OCI-LY7 (cell line): ENCODE measurements at regions of chrX and their contacts with region 1.

Region 1: GRCh38 chrX:47523297-47523696 is 37.7 kb upstream of the ARAF start:
- DNase-seq: peak; percentile 78
- H3K4me3 ChIP-seq: peak overlapping the region; percentile 68
- H3K27ac ChIP-seq: no peak overlapping the region
- H3K4me1 ChIP-seq: peaks cover 9% of the 10 kb centered on the region
- CTCF ChIP-seq: peak; percentile 74

Region 2: GRCh38 chrX:47384502-47384901 is 138.8 kb before region 1 on chrX:
- CTCF ChIA-PET with region 1: no interaction called
- POLR2A ChIA-PET with region 1: no interaction called
- intact Hi-C with region 1: loop called (anchors 5 kb)
- DNase-seq: peak; percentile 81
- H3K4me3 ChIP-seq: no peak overlapping the region
- H3K27ac ChIP-seq: no peak overlapping the region
- H3K4me1 ChIP-seq: no peaks in the 10 kb centered on the region
- CTCF ChIP-seq: peak; percentile 88

Region 3: GRCh38 chrX:47446431-47446830 is 76.9 kb before region 1 on chrX:
- CTCF ChIA-PET with region 1: no interaction called
- POLR2A ChIA-PET with region 1: no interaction called
- intact Hi-C with region 1: no loop called
- DNase-seq: no peak
- H3K4me3 ChIP-seq: no peak overlapping the region
- H3K27ac ChIP-seq: no peak overlapping the region
- H3K4me1 ChIP-seq: no peaks in the 10 kb centered on the region
- CTCF ChIP-seq: no peak

Region 4: DNA sequence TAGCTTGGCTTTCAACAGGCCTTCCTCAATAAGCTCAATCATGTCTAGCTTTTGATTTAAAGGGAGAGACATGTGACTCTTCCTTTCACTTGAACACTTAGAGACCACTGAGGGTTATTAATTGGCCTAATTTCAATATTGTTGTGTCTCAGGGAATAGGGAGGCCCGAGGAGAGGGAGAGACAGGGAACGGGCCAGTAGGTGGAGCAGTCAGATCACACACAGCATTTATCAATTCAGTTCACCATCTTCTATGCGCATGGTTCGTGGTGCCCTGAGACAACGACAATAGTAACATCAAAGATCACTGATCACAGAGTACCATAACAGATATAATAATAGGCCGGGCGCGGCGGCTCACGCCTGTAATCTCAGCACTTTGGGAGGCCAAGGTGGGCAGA is 331.2 kb after region 1 on chrX:
- CTCF ChIA-PET with region 1: no interaction called
- POLR2A ChIA-PET with region 1: no interaction called
- intact Hi-C with region 1: no loop called
- DNase-seq: peak; percentile 22
- H3K4me3 ChIP-seq: no peak overlapping the region
- H3K27ac ChIP-seq: no peak overlapping the region
- H3K4me1 ChIP-seq: peaks cover 8% of the 10 kb centered on the region
- CTCF ChIP-seq: peak; percentile 66